ENCODE measurements at regions of chr4 and their contacts with region 1.

Region 1: DNA sequence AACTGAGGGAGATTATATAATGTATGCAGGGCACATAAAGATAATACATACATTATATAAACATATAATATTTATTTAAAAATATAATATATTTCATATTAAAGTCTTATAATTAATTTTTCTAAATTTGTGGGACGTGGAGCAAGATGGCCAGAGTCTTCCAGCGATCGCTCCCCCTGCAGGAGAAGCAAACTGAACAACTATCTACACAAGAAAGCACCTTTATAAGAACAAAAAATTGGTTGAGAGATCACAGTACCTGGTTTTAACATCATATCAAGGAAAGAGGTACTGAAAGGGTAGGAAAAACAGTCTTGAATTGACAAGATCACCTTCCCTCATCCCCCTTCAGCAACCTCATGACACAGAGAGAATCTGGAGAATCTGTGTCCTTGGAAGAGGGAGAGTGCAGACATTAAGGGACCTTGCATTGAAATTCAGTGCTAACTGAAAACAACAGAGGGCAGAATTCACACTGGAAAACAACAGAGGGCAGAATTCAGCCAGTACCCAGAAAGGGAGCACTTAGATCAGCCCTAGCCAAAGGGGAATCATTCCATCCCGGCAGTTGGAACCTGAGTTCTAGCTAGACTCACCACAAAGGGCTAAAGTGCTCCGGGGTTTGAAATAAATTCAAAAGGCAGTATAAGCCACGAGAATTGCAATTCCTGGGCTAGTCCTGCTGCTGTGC is 262.5 kb upstream of the NDST3 start:
- DNase-seq: no peak
- H3K4me3 ChIP-seq: no peak overlapping the region
- H3K27ac ChIP-seq: no peak overlapping the region
- H3K4me1 ChIP-seq: no peaks in the 10 kb centered on the region
- H3K27me3 ChIP-seq: no peaks in the 10 kb centered on the region
- CTCF ChIP-seq: no peak
- POLR2A ChIP-seq: no peak

Region 2: GRCh38 chr4:117042962-117043361 is 728.8 kb before region 1 on chr4:
- intact Hi-C with region 1: loop called (anchors 10 kb)
- DNase-seq: no peak
- H3K4me3 ChIP-seq: no peak overlapping the region
- H3K27ac ChIP-seq: no peak overlapping the region
- H3K4me1 ChIP-seq: no peaks in the 10 kb centered on the region
- H3K27me3 ChIP-seq: no peaks in the 10 kb centered on the region
- CTCF ChIP-seq: no peak
- POLR2A ChIP-seq: no peak

Region 3: GRCh38 chr4:117533501-117533900 is 238.3 kb before region 1 on chr4:
- intact Hi-C with region 1: no loop called
- DNase-seq: no peak
- H3K4me3 ChIP-seq: no peak overlapping the region
- H3K27ac ChIP-seq: no peak overlapping the region
- H3K4me1 ChIP-seq: no peaks in the 10 kb centered on the region
- H3K27me3 ChIP-seq: no peaks in the 10 kb centered on the region
- CTCF ChIP-seq: no peak
- POLR2A ChIP-seq: no peak

Region 4: GRCh38 chr4:117831060-117831683 is 59.4 kb after region 1 on chr4:
- intact Hi-C with region 1: no loop called
- DNase-seq: no peak
- H3K4me3 ChIP-seq: no peak overlapping the region
- H3K27ac ChIP-seq: no peak overlapping the region
- H3K4me1 ChIP-seq: no peaks in the 10 kb centered on the region
- H3K27me3 ChIP-seq: no peaks in the 10 kb centered on the region
- CTCF ChIP-seq: no peak
- POLR2A ChIP-seq: no peak